ENCODE measurements at regions of chr1 and their contacts with region 1.

Region 1: GRCh38 chr1:97893844-97894243 is 27.0 kb downstream of the DPYD start:
- DNase-seq: no peak
- ATAC-seq: no peak
- H3K4me3 ChIP-seq: no peak overlapping the region
- H3K27ac ChIP-seq: no peak overlapping the region
- H3K4me1 ChIP-seq: no peaks in the 10 kb centered on the region
- H3K27me3 ChIP-seq: no peaks in the 10 kb centered on the region
- CTCF ChIP-seq: no peak
- EP300 ChIP-seq: no peak
- POLR2A ChIP-seq: no peak
- RAD21 ChIP-seq: no peak

Region 2: DNA sequence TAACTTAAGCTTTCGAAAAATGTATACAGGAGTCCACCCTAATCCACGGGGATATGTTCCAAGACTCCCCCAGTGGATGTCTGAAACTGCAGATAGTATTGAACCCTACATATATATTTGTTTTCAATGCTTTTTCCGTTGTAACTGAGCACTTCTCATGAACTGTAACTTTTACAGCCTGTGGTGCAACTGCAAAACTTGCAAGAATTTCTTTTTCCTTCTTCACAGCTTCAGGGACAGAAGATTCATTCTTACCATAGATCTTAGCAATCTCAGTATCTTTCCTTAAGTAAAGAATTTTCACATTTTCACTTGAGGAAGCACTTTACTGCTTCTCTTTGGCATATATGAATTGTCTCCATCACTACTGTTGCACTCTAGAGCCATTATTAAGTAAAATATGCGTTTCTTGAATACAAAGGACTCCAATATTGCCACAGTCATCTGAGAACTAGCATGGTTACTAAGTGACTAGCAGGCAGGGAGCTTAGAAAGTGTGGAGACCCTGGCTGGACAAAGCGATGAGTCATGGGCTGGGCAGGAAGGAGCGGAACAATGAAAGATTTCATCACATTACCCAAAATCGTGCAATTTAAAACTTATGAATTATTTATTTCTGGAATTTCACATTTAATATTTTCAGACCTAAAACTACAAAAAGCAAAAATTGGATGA is 12.9 kb after region 1 on chr1:
- CTCF ChIA-PET with region 1: interaction called, 4 read pairs
- POLR2A ChIA-PET with region 1: interaction called, 3 read pairs
- RAD21 ChIA-PET with region 1: interaction called, 8 read pairs
- SMC1A ChIA-PET with region 1: interaction called, 11 read pairs
- in situ Hi-C with region 1: no loop called
- intact Hi-C with region 1: no loop called
- DNase-seq: no peak
- ATAC-seq: peak; percentile 32; the same call in 2 of the 3 replicates
- H3K4me3 ChIP-seq: no peak overlapping the region
- H3K27ac ChIP-seq: no peak overlapping the region
- H3K4me1 ChIP-seq: no peaks in the 10 kb centered on the region
- H3K27me3 ChIP-seq: no peaks in the 10 kb centered on the region
- CTCF ChIP-seq: no peak
- EP300 ChIP-seq: no peak
- POLR2A ChIP-seq: no peak
- RAD21 ChIP-seq: no peak